ENCODE measurements at regions of chr17 and their contacts with region 1.

Region 1: GRCh38 chr17:31048775-31049174 is 46.0 kb upstream of the NF1 start:
- H3K4me3 ChIP-seq: no peak overlapping the region
- H3K27ac ChIP-seq: no peak overlapping the region
- H3K4me1 ChIP-seq: no peaks in the 10 kb centered on the region
- CTCF ChIP-seq: no peak

Region 2: GRCh38 chr17:31008374-31009041 is 40.3 kb before region 1 on chr17:
- CTCF ChIA-PET with region 1: no interaction called
- POLR2A ChIA-PET with region 1: no interaction called
- H3K4me3 ChIP-seq: peak overlapping the region; percentile 70
- H3K27ac ChIP-seq: peak overlapping the region; percentile 97
- H3K4me1 ChIP-seq: peaks cover 3% of the 10 kb centered on the region; the same call in 1 of the 2 replicates
- CTCF ChIP-seq: peak; percentile 52

Region 3: DNA sequence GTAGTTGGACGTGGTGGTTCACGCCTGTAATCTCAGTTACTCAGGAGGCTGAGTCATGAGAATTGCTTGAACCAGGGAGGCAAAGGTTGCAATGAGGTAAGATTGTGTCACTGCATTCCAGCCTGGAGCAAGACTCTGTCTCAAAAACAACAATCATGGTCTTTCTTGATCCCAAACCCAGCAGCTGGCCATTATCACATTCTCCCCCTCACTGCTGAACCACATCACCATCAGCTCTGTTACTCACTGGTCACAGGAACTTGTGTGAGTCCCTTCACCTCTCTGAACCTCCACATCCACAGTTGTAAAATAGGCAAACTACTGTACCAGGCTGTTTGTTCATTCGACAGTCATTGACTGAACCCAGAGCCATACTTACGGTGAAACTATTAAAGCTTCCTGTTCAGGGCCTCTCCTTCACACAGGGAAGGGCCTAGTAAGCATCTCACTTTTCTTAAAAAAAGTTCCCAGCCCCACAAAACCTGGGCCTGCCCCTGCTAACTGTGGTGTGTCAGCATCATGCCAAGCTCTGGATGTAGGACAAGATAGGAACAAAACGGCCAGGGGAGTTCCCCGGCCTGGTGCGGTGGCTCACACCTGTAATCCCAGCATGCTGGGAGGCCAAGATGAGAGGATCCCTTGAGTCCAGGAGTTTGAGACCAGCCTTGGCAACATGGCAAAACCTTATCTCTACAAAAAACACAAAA is 705.6 kb after region 1 on chr17:
- CTCF ChIA-PET with region 1: no interaction called
- POLR2A ChIA-PET with region 1: interaction called, 13 read pairs
- H3K4me3 ChIP-seq: no peak overlapping the region
- H3K27ac ChIP-seq: no peak overlapping the region
- H3K4me1 ChIP-seq: no peaks in the 10 kb centered on the region
- CTCF ChIP-seq: no peak

Measured in HEK293 (cell line).